ENCODE measurements at regions of chr9 and their contacts with region 1.

Region 1: GRCh38 chr9:35489313-35490154 is at the start of gene RUSC2:
- DNase-seq: peak; percentile 90
- ATAC-seq: peak; percentile 88 to 91
- total RNA-seq, gene RUSC2: 32.2 to 43.0 TPM

Region 2: DNA sequence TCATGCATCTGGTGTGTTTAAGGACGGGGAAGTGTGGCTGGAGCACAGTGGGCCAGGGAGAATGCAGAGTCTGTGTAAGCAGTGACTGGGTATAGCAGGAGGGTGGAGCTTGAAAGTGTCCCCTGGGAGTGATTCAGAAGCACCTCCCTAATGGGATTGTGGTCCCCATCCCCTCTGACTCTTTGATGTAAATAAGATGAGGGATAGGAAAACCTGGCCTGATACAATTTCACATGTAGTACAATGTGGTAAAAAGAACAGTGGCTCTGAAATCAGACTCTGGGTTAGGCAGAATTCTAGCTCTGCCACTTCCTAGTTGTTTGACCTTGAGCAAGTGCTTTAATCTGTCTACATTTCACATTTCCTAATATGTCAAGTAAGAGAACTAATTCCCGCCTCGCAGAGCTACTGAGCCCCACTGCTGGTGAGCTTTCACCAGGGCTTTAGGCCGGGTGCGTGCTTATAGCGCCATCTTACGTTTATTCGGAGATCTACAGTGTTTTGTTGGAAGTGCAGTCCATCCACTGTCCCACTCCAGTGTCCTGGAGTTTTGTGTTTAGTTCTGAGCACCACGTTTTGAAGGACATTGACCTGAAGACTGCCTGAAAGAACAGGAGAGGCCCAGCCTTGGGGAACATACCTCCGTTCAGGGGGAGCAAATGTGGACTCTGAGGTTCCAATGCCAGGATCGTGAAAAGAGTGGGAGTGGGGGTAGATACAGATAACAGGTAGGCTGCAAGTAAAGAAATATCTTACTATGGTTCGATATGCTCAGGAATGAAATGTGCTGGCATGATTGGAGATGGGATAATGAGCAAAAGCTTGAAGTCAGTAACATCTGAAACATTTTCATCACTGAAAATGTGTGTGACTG is 64.4 kb after region 1 on chr9:
- intact Hi-C with region 1: loop called (anchors 2 kb)
- DNase-seq: peak; percentile 77
- ATAC-seq: peak; percentile 88 to 89

Region 3: GRCh38 chr9:35954942-35955546 is 465.5 kb after region 1 on chr9:
- intact Hi-C with region 1: no loop called
- DNase-seq: peak; percentile 53
- ATAC-seq: peak; percentile 73 to 82